HEK293T (cell line): ENCODE measurements at regions of chr10 and their contacts with region 1.

Region 1: DNA sequence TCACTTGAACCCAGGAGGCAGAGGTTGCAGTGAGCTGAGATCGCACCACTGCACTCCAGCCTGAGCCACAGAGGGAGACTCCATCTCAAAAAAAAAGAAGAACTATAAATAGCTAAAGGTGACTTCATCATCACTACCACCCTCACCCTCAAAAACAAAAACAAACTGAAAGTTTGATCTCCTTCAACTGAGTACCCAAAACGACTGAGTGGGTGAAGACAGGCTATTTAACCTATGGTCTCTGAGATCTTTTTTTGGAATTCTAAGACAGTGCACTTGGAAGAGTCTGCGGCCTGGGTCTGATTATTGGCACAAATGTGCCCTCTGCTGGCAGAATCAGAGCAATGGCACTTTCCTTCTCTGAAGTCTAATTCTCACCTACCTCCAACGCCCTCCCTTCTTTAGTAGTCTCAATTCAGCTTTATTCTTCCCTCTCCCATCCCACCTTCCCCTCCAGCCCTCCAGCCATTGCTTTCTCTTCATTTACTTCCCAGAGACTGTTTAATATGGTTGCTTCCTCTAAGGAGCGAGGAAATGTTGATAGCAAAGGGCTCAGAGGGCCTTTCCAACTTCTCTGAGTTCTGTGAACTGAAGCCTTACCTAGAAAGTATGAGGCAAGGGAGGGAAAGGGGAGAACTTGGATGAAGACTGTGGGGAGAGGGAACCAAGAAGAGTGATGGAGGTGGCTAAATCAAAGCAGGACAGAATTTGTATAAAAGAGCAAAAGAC is 2.9 kb upstream of the MYOZ1 start:
- DNase-seq: peak; percentile 77

Region 2: GRCh38 chr10:73252445-73253224 is 391.5 kb before region 1 on chr10 and contains the start of gene MRPS16:
- CTCF ChIA-PET with region 1: no interaction called
- POLR2A ChIA-PET with region 1: no interaction called
- DNase-seq: peak; percentile 89

Region 3: DNA sequence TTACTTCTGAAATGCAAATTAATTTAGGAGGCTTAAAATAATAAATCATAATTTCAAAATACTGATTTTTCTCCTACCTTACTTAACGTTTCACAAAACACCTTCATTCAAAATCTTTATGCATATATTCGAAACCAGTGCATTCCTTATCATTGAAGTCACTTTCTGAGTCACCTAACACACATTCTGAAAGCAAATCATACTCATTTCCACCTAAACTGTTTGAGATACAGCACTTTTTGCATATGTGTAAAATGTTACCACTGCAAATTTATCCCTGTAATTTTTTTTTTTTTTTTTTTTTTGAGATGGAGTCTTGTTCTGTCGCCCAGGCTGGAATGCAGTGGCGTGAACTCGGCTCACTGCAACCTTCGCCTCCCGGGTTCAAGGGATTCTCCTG is 164.0 kb before region 1 on chr10:
- CTCF ChIA-PET with region 1: no interaction called
- POLR2A ChIA-PET with region 1: no interaction called
- DNase-seq: no peak

Region 4: DNA sequence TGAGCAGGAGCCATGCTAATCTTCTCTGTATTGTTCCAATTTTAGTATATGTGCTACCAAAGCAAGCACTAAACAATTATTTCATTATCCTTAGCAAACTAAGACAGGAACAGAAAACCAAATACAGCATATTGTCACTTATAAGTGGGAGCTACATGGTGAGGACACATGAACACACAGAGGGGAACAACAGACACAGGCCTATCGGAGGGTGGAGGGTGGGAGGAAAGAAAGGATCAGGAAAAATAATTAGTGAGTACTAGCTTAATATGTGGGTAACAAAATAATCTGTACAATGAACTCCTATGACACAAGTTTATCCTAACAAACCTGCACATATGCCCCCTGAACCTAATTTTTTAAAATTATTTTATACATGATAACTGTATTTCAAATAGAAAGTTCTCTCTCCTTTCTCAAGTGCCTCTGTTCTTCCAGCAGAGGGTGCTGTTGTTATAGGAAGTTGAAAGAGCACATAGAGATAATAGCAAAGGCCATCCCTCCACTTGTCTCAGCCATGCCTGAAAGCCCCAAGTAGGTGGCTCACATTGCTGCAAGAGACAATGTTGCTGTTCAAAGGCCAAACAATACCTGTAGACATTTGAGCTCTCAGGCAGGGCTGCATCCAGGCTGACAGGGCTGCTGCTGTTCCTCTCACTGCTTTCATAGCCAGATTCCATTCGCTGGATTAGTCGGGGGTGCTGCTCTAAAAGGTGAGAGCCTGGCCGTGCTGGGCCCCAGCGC is 114.9 kb before region 1 on chr10:
- CTCF ChIA-PET with region 1: interaction called, 41 read pairs
- POLR2A ChIA-PET with region 1: interaction called, 3 read pairs
- DNase-seq: peak; percentile 71

Region 5: DNA sequence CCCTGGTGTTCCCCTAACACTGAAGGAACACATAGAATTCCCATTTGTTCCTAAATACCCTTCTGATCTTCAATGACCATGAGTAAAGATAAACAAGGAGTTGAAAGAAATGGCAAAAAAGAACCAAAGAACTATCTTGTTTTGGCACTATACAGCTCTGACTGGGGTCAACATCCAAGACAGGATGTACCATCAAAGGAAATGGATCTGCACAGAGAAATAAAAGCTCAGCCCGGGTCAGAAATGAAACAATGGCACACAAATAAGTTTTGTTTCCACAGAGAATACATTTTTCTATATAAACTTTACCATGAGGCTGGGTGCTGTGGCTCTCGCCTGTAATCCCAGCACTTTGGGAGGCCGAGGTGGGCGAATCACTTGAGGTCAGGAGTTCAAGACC is 35.1 kb before region 1 on chr10:
- CTCF ChIA-PET with region 1: no interaction called
- POLR2A ChIA-PET with region 1: no interaction called
- DNase-seq: no peak

Region 6: GRCh38 chr10:73628405-73628804 is 15.8 kb before region 1 on chr10:
- CTCF ChIA-PET with region 1: interaction called, 3 read pairs
- POLR2A ChIA-PET with region 1: interaction called, 10 read pairs
- DNase-seq: no peak